ENCODE measurements at regions of chr2 and their contacts with region 1.

Region 1: GRCh38 chr2:16183345-16183744 is 243.0 kb downstream of the MYCN start:
- DNase-seq: no peak
- ATAC-seq: no peak
- H3K4me3 ChIP-seq: no peak overlapping the region
- H3K27ac ChIP-seq: no peak overlapping the region
- H3K4me1 ChIP-seq: peaks cover 0 to 17% (median 0%) of the 10 kb centered on the region in 9 donors
- H3K27me3 ChIP-seq: peaks cover 0 to 15% (median 0%) of the 10 kb centered on the region in 7 donors
- CTCF ChIP-seq: no peak

Region 2: DNA sequence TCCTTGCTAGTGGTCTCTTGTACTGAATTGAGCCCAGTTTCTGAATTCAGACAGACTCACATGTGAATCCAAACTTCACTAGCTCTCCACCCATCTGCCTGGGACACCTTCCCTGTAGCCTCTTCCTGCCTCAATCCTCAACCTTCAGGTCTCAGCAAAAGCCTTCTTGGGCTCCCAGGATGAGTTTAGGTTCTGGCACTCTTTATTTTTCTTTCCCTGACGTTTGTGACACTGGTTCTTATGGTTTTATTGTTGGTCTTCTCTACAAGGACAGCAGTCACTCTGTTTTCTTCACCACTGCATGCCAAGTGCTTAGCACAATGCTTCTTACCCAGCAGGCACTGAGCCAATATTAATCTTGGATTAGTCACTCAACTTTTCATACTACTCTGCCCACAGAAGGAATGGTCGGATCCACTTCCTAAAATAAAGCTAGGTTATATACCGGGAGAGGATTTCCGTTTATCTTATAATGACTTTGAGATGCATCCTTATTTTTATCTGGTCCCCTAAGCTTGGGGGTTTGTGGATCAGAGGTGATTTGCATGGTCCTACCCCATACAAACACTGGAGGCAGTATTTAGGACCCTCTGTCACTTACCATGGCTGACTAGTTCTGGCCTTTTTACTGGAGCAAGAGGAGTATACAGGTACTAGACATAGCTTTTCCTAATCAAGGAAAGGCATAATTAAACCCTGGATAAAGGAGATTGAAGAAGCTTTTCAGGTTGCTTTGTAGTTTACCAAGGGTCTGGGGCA is 56.6 kb before region 1 on chr2:
- intact Hi-C with region 1: loop called in 1 of 10 experiments (anchors 2 kb)
- DNase-seq: no peak
- ATAC-seq: no peak
- H3K4me3 ChIP-seq: no peak overlapping the region
- H3K27ac ChIP-seq: no peak overlapping the region
- H3K4me1 ChIP-seq: no peaks in the 10 kb centered on the region
- H3K27me3 ChIP-seq: peaks cover 0 to 14% (median 4%) of the 10 kb centered on the region in 7 donors
- CTCF ChIP-seq: no peak

Region 3: DNA sequence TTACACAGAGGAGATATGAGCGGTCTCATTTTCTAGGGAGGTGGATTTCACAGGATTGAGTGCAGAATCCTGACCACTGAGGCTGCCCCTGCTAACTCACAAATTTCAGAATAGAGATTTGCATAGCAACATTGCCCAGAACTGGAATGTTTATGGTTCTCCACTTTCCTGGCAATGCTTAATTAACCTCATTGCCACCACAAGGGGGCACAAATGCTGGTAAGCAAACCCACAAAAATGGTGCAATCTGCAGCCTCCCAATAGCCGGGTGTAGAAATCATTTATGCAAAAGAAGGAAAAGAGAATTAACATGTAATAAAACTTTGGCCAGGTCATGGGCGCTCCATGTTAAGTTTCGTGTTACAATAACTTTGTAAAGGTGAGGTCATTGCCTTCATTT is 369.9 kb after region 1 on chr2:
- intact Hi-C with region 1: no loop called
- DNase-seq: peak in 1 of 2 donors; percentile 16
- ATAC-seq: peak in 2 of 8 donors; percentile 12 to 22
- H3K4me3 ChIP-seq: no peak overlapping the region
- H3K27ac ChIP-seq: no peak overlapping the region
- H3K4me1 ChIP-seq: no peaks in the 10 kb centered on the region
- H3K27me3 ChIP-seq: no peaks in the 10 kb centered on the region
- CTCF ChIP-seq: peak; percentile 23 to 68 (median 61)

Region 4: GRCh38 chr2:16756831-16757644 is 573.7 kb after region 1 on chr2:
- intact Hi-C with region 1: no loop called
- DNase-seq: peak; percentile 80 to 81
- ATAC-seq: peak; percentile 78 to 94 (median 92)
- H3K4me3 ChIP-seq: no peak overlapping the region
- H3K27ac ChIP-seq: peak overlapping the region in 5 of 10 donors; percentile 39 to 61 (median 57)
- H3K4me1 ChIP-seq: peaks cover 0 to 28% (median 10%) of the 10 kb centered on the region in 9 donors
- H3K27me3 ChIP-seq: peaks cover 0 to 5% (median 0%) of the 10 kb centered on the region in 7 donors
- CTCF ChIP-seq: peak; percentile 89 to 96 (median 93)

Measured in heart right ventricle (tissue), 16 donors.